ENCODE measurements at regions of chr2 and their contacts with region 1.

Region 1: DNA sequence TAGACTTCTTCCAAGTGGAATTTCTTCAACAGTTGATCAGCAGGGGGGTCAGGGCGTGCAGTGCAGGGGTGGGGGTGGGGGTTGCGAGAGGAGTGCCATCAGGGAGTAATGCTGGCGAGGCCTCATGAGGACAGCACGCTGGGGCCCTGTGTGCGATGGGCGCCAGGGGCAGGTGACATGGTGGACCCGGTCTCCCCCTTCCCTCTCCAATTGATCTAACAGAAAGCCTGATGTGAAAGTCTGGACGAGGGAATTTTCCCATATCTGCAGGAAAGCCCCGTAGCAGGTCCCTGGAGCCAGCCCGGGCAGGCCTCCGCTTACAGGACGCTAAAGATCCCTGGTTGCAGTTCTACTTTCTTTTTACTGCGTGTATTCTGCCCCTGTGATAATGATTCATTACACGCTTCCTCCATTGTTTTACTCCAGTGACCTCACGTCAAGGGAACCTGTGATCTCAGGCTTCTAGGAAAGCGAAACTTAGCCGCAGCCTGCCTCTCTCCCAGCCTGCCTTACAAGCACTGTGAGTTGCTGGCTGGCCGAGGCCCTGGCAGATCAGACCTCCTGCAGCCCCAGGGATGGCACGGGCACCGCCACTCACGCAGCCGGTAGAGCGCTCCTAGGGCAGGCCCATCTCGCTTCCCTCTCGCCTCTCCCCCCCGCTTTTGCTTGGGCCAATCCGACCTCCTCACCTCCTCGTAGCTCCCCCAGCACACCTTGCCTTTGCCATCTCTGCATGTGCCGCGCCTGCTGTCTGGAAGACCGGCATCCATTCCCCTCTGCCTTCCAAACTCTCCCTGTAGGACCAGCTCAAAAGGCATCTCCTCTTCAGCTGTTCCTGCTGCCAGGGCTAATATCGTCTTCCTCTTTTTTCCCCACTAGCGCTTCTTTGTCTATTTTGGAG is 19.2 kb downstream of the NEURL3 start:
- DNase-seq: peak; percentile 94
- H3K4me3 Mint-ChIP-seq: peak overlapping the region; percentile 97
- H3K27ac Mint-ChIP-seq: peak overlapping the region; percentile 99
- H3K4me1 Mint-ChIP-seq: peaks cover 49% of the 10 kb centered on the region
- H3K27me3 Mint-ChIP-seq: no peaks in the 10 kb centered on the region

Region 2: GRCh38 chr2:96305091-96305978 is 180.7 kb before region 1 on chr2 and contains the start of gene SNRNP200:
- CTCF ChIA-PET with region 1: no interaction called
- intact Hi-C with region 1: loop called (anchors 5 kb)
- DNase-seq: peak; percentile 92
- H3K4me3 Mint-ChIP-seq: peak within 1 kb of the TSS; percentile 100
- H3K27ac Mint-ChIP-seq: peak within 1 kb of the TSS; percentile 98
- H3K4me1 Mint-ChIP-seq: peaks cover 49% of the 10 kb centered on the region
- H3K27me3 Mint-ChIP-seq: no peaks in the 10 kb centered on the region
- total RNA-seq, gene SNRNP200: 179 to 181 TPM

Region 3: DNA sequence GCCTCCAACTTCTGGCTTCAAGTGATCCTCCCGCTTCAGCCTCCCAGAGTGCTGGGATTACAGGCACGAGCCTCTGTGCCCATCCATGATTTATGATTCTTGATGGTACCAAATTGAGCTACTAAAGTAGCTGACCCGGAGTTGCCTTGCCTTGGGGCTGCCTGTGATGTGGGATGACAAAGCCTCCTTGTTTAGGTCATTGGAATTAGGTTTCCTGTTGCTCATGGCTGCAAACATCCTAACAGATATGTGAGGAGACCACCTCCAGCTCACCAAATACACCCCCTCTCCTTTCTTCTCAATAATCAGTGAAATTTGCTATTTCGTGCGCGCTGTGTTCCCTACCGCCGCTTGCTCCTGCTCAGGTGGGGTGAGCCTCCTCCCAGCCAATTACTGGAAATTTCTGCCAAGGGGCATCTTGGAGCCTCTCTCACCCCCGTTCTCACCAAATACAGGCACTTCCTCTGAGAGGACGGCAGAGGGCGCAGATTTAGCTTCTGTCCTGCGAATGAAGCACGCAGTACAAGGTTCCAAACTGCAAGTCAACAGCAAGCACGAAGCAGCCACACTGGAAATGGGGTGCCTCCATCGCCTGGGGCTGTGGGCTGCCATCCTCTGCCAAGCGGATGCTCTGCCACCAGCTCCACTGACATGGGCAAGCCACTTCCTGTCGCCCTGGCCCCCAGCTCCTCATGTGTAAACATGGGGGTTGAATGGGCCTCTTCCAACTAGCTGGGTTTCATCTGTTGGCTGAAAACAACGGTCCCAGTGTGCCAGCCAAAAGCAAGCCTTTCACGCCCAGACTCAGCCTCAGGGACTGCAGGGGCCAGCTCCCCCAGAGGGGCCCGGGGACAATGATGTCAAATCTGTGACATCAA is 78.7 kb before region 1 on chr2:
- CTCF ChIA-PET with region 1: interaction called, 11 read pairs
- intact Hi-C with region 1: loop called (anchors 1 kb)
- DNase-seq: peak; percentile 81
- H3K4me3 Mint-ChIP-seq: no peak overlapping the region
- H3K27ac Mint-ChIP-seq: peak overlapping the region; percentile 71
- H3K4me1 Mint-ChIP-seq: peaks cover 27% of the 10 kb centered on the region
- H3K27me3 Mint-ChIP-seq: no peaks in the 10 kb centered on the region

Region 4: GRCh38 chr2:96470636-96471035 is 15.4 kb before region 1 on chr2:
- CTCF ChIA-PET with region 1: interaction called, 3 read pairs
- intact Hi-C with region 1: loop called (anchors 2 kb)
- DNase-seq: peak; percentile 64
- H3K4me3 Mint-ChIP-seq: no peak overlapping the region
- H3K27ac Mint-ChIP-seq: no peak overlapping the region
- H3K4me1 Mint-ChIP-seq: peaks cover 7% of the 10 kb centered on the region
- H3K27me3 Mint-ChIP-seq: peaks cover 7% of the 10 kb centered on the region

Region 5: DNA sequence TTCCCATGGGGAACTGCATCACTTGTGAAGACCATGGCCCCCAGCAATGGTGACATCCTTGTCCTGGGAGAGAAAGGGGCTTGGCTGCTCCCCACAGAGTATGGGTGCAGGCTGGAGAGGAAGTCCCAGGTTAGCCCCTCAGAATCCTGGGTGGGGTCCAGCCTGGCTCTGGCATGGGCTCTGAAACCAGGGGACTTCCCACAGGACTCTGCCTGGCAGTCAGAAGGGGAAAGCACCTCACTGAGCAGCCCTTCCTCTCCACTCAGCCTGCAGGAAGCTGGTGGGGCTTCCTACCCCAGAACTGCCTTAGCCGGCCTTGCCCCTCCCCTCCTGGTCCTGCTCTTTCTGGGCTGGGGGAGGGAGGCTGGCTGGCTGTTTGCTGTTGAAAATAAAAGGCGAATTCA is 15.5 kb after region 1 on chr2:
- CTCF ChIA-PET with region 1: interaction called, 3 read pairs
- intact Hi-C with region 1: loop called (anchors 1 kb)
- DNase-seq: peak; percentile 78
- H3K4me3 Mint-ChIP-seq: peak overlapping the region; percentile 5
- H3K27ac Mint-ChIP-seq: peak overlapping the region; percentile 62
- H3K4me1 Mint-ChIP-seq: peaks cover 16% of the 10 kb centered on the region
- H3K27me3 Mint-ChIP-seq: no peaks in the 10 kb centered on the region

Region 6: GRCh38 chr2:96536445-96537065 is 50.6 kb after region 1 on chr2 and contains the start of gene ARID5A:
- CTCF ChIA-PET with region 1: no interaction called
- intact Hi-C with region 1: loop called (anchors 1 kb)
- DNase-seq: peak; percentile 96
- H3K4me3 Mint-ChIP-seq: peak within 1 kb of the TSS; percentile 96
- H3K27ac Mint-ChIP-seq: peak within 1 kb of the TSS; percentile 99
- H3K4me1 Mint-ChIP-seq: peaks cover 60% of the 10 kb centered on the region
- H3K27me3 Mint-ChIP-seq: no peaks in the 10 kb centered on the region
- total RNA-seq, gene ARID5A: 349 to 351 TPM

Region 7: GRCh38 chr2:96685577-96686459 is 199.8 kb after region 1 on chr2:
- CTCF ChIA-PET with region 1: no interaction called
- intact Hi-C with region 1: no loop called
- DNase-seq: no peak
- H3K4me3 Mint-ChIP-seq: no peak overlapping the region
- H3K27ac Mint-ChIP-seq: no peak overlapping the region
- H3K4me1 Mint-ChIP-seq: no peaks in the 10 kb centered on the region
- H3K27me3 Mint-ChIP-seq: peaks cover 4% of the 10 kb centered on the region

Measured in activated naive CD4-positive, alpha-beta T cell treated with anti-CD3 and anti-CD28 coated beads for 36 hours (primary cell).